Activated T-helper 1 cell treated with anti-CD3 and anti-CD28 coated beads, Interleukin-12 subunit alpha, Interleukin-12 subunit beta, Interleukin-2, Interleukin-4 antibody, amounts not matched to agents 30 ng/mL and 10 ng/mL and 1 ng/mL, durations not matched to agents 14 hours and 24 hours and 36 hours (primary cell): ENCODE measurements at regions of chr10 and their contacts with region 1.

Region 1: GRCh38 chr10:14659626-14660196 is 115.0 kb downstream of the FAM107B start:
- DNase-seq: peak; percentile 59
- H3K4me3 Mint-ChIP-seq: peak overlapping the region; percentile 46
- H3K27ac Mint-ChIP-seq: peak overlapping the region; percentile 92
- H3K4me1 Mint-ChIP-seq: peaks cover 81% of the 10 kb centered on the region
- H3K27me3 Mint-ChIP-seq: no peaks in the 10 kb centered on the region

Region 2: DNA sequence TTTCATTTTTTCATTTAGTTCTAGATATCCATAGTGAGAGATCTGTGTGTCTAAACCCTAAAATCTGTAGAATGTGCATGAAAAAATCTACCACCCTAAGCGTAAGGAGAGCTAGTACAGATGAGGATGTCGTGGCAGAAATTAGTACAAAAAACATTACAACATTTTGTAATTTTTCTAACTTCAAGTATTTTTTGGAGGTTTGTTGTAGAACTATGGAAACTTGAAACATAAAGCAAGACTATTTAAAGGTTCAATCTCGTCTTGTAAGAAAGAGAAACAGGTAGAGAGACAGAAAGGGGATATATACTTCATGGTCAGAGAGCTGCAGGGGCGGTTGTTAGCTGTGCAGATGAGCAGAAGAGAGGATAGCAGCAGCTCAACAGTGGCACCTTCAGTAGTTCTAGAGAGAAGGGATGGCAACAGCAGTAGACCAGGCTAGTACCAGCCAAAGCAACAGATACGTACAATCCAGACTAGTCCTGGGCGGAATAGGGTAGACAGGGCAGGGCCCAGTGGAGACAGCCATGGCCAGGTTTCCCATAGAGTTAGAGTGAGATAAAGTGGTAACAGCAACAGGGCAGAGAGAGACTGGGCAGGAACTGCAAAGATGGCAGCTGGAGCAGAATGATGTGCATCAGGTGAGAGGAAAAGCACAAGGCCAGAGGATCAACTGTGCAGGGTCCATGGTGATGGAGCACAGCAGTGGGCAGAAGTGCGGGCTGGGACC is 474.2 kb before region 1 on chr10:
- intact Hi-C with region 1: loop called (anchors 1 kb)
- DNase-seq: peak; percentile 52
- H3K4me3 Mint-ChIP-seq: peak overlapping the region; percentile 46
- H3K27ac Mint-ChIP-seq: peak overlapping the region; percentile 92
- H3K4me1 Mint-ChIP-seq: peaks cover 20% of the 10 kb centered on the region
- H3K27me3 Mint-ChIP-seq: peaks cover 48% of the 10 kb centered on the region

Region 3: GRCh38 chr10:14560274-14560673 is 99.4 kb before region 1 on chr10:
- intact Hi-C with region 1: loop called (anchors 1 kb)
- DNase-seq: peak; percentile 59
- H3K4me3 Mint-ChIP-seq: peak overlapping the region; percentile 41
- H3K27ac Mint-ChIP-seq: peak overlapping the region; percentile 95
- H3K4me1 Mint-ChIP-seq: peaks cover 97% of the 10 kb centered on the region
- H3K27me3 Mint-ChIP-seq: no peaks in the 10 kb centered on the region

Region 4: DNA sequence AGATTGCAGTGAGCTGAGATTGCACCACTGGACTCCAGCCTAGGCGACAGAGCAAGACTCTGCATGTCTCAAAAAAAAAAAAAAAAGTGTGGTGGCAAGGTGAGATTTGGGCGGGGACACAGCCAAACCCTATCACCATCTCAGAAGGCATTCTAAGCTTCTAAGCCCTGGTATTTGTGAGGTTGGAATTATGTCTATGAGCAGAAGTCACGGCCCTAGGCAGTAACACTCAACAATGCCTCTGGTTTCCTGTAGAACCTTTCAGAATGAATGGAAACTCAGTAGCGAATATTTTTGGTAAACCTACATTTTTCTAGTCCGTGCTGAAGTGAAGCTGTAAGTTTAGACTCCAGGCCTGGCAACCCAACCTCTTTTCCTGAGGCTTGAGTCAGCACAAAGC is 26.6 kb after region 1 on chr10:
- intact Hi-C with region 1: loop called (anchors 1 kb)
- DNase-seq: no peak
- H3K4me3 Mint-ChIP-seq: no peak overlapping the region
- H3K27ac Mint-ChIP-seq: peak overlapping the region; percentile 40
- H3K4me1 Mint-ChIP-seq: peaks cover 38% of the 10 kb centered on the region
- H3K27me3 Mint-ChIP-seq: peaks cover 2% of the 10 kb centered on the region

Region 5: GRCh38 chr10:14904316-14904732 is 244.6 kb after region 1 on chr10:
- intact Hi-C with region 1: no loop called
- DNase-seq: no peak
- H3K4me3 Mint-ChIP-seq: no peak overlapping the region
- H3K27ac Mint-ChIP-seq: no peak overlapping the region
- H3K4me1 Mint-ChIP-seq: peaks cover 6% of the 10 kb centered on the region
- H3K27me3 Mint-ChIP-seq: no peaks in the 10 kb centered on the region